ENCODE measurements at regions of chr10 and their contacts with region 1.

Region 1: DNA sequence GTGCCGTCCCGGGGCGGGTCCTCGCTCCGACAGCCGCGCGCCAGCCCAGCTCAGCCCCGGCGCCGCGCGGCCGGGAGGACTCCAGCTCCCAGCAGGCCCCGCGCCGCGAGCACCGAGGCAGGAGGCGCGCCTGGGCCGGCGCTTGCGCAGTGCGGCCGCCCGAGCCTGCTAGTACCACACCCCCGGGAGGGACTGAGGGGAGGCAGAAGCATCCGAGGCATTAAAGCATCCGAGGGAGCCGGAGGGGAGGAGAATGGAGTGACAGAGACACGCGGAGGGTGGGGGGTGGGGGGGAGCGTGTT is at the start of gene GRK5:
- DNase-seq: peak; percentile 93

Region 2: GRCh38 chr10:119348516-119349240 is 141.4 kb after region 1 on chr10:
- in situ Hi-C with region 1: no loop called
- DNase-seq: no peak

Region 3: DNA sequence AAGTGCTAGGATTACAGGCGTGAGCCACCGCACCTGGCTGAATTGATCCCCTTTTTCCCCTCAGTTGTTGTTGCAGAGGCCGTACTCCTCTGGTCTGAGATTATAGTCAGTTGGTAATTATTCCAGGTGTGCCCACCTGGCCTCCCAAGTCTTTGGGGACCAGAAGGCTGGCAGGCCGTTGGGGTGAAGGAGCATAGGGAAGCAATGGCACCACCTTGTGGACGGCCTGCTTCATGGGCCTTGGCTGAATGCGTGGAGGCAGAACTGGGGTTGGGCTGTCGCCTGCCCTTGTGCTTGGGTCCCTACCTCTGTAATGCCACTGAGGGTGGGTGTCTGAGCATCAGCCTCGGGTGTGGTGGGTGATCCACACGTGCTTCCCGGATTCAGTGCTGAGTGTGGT is 209.5 kb after region 1 on chr10:
- in situ Hi-C with region 1: loop called (anchors 25 kb)
- DNase-seq: peak; percentile 74

Measured in KBM-7 (cell line).